ENCODE measurements at regions of chr20 and their contacts with region 1.

Region 1: DNA sequence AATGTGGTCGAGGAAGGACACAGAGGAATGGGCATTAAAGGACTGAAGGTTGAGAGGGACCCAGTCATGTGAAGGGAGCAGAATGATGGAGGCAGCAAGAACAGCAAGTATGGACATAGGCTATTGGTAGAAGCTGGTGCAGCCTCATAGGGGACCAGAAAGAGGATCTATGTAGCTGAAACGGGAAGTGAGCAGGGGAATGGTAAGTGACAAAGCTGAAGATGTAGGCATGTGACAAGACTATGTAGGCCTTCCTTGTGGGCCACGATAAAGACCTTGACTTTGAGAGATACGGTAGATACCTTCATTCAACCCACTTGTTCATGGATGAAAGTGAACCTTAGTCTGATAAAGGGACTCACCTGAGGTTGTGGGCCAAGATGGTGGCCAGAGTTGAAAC is 3.5 kb downstream of the CTNNBL1 start:
- DNase-seq: no peak
- ATAC-seq: no peak

Region 2: GRCh38 chr20:37192137-37192854 is 505.0 kb before region 1 on chr20:
- intact Hi-C with region 1: no loop called
- DNase-seq: peak; percentile 91
- ATAC-seq: peak; percentile 89

Region 3: DNA sequence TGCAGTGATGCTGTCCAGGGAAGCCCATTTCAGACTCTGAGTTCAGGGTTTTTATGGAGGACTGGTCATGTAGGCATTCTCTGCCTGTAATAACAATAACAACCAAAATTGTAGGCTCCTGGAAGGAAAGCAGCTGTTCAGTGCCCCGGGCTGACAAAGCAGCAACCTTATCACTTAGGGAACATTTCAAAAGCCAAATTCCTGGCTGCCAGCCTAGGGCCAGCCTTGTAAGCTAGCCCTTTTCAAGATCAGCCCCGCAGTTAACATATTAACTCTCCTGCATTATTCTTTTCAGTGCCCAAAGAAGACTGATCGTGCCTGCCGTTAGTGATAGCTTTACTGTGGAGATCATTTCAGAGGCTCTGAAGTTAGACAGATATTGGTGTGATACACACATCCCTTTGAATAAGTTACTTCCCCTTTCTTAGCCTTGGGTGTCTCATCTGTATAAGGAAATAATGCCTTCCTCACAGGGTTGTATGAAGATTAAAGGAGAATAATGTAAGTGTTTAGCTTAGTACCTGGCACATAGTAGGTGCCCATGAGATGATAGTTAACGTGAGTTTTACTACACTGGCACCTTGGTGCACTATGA is 40.6 kb after region 1 on chr20:
- intact Hi-C with region 1: loop called (anchors 2 kb)
- DNase-seq: peak; percentile 55
- ATAC-seq: peak; percentile 68